Activated CD8-positive, alpha-beta T cell treated with anti-CD3 and anti-CD28 coated beads, Interleukin-2, amount 10 ng/mL, durations not matched to agents 7 days and 5 days (primary cell): ENCODE measurements at regions of chr12 and their contacts with region 1.

Region 1: GRCh38 chr12:49567611-49568441 is at the start of gene MCRS1:
- DNase-seq: peak; percentile 94
- ATAC-seq: peak; percentile 78
- H3K4me3 Mint-ChIP-seq: peak within 1 kb of the TSS; percentile 94
- H3K27ac Mint-ChIP-seq: peak within 1 kb of the TSS; percentile 98
- H3K4me1 Mint-ChIP-seq: peaks cover 68% of the 10 kb centered on the region
- H3K27me3 Mint-ChIP-seq: no peaks in the 10 kb centered on the region
- total RNA-seq, gene MCRS1: 85.9 to 86.1 TPM

Region 2: DNA sequence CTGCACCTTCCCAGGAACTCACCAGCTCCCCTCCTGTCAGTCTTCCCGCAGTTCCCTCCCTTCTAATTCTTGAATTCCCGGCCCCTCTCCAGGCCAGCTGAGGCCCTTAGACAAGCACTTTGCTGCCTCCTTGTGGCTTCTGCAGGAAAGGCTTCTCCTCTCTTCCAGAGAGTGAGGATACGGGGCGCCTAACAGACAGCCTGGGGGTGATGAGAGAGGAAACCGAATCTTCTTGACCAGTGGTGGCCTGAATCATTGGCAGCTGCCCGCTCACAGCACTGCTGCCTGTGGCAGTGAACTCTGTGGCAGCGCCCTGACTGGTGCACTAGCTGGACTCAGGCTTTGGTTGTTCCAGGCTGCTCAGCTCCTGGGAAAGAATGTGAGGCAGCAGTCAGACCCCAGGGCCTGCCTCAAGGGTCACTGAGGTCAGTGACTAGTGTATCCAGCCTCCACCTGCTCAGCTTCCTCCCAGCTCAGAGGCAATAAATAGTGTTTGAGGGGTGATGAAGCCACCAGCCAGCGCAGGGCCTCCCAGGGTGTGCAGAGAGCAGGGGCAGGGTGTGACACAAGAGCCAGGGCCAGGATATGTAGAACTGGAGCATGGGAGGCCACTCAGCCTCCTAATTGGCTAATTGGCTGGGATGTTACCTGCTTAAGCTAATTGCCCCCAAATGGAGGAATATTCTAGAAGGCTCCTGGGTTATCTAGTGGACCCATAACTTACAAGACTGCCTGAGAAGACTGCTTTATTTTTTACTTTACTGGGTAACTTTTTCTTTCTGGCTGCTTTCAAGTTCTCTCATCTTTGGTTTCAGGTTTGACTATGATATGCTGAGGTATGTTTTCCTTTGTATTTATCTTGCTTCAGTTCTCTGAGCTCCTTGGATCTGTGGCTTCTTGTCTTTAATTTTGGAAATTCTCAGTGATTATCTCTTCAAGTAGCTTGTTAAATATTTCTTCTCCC is 13.0 kb after region 1 on chr12:
- CTCF ChIA-PET with region 1: interaction called, 41 read pairs
- POLR2A ChIA-PET with region 1: interaction called, 3 read pairs
- DNase-seq: peak; percentile 77
- ATAC-seq: peak; percentile 92
- H3K4me3 Mint-ChIP-seq: no peak overlapping the region
- H3K27ac Mint-ChIP-seq: no peak overlapping the region
- H3K4me1 Mint-ChIP-seq: peaks cover 14% of the 10 kb centered on the region
- H3K27me3 Mint-ChIP-seq: no peaks in the 10 kb centered on the region

Region 3: GRCh38 chr12:49696723-49697122 is 128.9 kb after region 1 on chr12:
- CTCF ChIA-PET with region 1: no interaction called
- POLR2A ChIA-PET with region 1: no interaction called
- DNase-seq: no peak
- ATAC-seq: no peak
- H3K4me3 Mint-ChIP-seq: no peak overlapping the region
- H3K27ac Mint-ChIP-seq: no peak overlapping the region
- H3K4me1 Mint-ChIP-seq: peaks cover 39% of the 10 kb centered on the region
- H3K27me3 Mint-ChIP-seq: no peaks in the 10 kb centered on the region